ENCODE measurements at regions of chr3 and their contacts with region 1.

Region 1: DNA sequence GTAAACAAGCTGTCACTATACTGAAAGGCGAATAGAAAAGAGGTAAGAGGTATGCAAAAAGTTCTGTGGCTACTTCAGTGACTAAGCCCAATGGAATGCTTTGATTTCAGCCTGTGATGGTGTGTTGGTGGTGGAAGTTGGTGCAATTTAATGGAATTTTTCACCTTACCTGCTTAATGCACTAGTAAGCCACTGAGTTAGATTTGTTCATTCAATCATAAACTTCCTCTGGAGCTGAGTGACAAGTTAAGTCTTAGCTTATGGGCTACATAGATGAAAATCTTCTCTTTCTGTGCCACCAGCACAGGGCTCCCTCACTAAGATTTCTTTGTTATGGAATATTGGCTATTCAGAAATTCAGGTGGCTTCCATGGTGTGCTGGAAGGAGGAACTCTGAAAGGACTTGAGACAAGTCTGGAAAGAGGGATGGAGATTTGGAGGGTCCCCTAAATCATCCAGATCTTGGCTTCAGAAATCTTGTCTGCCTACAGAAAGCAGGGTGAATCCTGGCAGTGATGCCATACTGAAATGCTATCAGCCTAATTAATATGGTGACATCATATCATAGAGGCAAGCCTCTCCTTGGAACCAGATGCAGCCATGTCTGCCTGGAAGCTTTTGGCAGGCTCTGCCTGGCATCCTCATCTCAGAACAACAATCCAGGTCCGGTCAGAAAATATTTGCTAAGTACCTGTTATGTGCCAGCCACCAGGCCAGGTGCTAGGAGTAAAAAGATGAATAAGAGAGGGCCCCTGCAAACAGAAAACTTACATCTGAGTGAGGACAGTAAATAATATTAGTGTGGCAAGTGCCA is 8.1 kb upstream of the GAP43 start:
- DNase-seq: no peak
- ATAC-seq: no peak
- H3K4me3 Mint-ChIP-seq: no peak overlapping the region
- H3K27ac Mint-ChIP-seq: no peak overlapping the region
- H3K4me1 Mint-ChIP-seq: peaks cover 20% of the 10 kb centered on the region
- H3K27me3 Mint-ChIP-seq: peaks cover 21% of the 10 kb centered on the region

Region 2: DNA sequence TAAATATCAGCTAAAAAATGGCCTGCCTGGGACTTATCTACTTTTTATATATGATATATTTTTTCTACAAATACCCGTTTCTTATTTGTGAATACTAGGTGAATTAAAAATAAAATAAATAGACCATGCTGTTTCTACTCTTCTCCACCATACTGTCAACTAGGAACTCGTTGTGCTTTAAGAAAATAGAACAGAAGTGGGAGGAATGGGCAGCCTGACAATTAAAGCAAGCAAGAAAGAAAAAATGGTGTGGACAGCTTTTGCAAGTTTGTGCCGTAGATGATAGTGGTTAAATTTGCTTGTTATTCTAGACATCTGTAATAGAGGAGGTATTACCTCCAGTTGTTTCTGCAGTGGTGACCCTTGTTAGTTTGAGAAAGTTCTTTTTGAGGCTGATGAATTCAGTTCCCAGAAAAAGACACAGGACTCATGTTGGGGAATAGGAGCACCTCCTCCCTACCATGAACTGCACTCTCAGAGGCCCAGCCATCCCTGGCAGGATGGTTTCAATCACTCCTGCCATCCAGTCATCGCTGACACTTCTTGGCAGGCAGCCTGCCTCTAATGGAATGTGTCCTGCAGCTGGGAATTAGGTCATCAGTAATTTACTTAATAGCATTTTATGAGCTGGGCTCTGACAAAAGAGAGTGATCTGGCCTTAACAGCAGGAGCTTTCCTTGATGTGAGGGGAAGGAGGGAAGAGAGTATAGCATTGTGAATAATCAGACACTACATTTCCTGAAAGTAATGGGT is 96.9 kb before region 1 on chr3:
- CTCF ChIA-PET with region 1: no interaction called
- POLR2A ChIA-PET with region 1: no interaction called
- intact Hi-C with region 1: loop called in 1 of 2 experiments (anchors 5 kb)
- DNase-seq: no peak
- ATAC-seq: no peak
- H3K4me3 Mint-ChIP-seq: no peak overlapping the region
- H3K27ac Mint-ChIP-seq: no peak overlapping the region
- H3K4me1 Mint-ChIP-seq: peaks cover 9% of the 10 kb centered on the region
- H3K27me3 Mint-ChIP-seq: peaks cover 7% of the 10 kb centered on the region

Region 3: DNA sequence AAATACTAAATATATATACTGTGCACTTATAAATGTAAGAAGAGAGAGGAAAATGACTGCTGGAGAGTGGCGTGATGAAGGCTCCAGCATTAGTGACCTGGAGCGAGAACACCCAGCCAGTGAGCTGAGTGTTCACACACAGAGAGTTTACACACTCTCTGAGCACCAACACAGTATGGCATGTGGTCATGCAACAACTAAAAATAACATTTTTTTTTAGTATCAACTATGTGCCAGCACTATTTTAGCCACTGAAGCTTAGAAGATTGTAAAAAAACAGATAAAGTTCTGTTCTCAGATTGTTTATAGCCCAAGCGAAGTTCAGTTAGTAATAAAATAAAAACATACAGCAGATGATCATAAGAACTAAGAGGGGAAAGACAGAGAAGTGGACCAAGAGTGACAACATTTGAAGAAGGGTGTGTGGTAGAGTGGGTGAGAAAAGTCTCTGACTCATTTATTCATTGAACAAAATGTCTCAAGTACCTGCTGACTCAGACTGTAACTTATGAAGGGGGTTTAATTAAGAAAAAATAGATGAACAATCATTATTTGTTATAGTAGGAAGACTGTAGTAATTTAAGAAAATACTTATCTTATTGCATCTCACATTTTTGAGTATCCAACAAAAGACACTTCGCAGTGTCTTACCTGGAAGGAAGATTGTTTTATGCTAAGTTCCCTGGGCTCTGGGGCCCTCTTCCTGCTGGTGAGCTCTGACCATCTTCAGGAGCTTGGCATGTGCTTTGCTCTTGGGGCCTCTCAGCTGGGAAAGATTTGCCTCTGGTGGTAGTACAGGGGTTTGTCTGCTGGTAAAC is 51.9 kb after region 1 on chr3:
- CTCF ChIA-PET with region 1: no interaction called
- POLR2A ChIA-PET with region 1: no interaction called
- intact Hi-C with region 1: loop called in 1 of 2 experiments (anchors 2 kb)
- DNase-seq: peak; percentile 15
- ATAC-seq: peak; percentile 92
- H3K4me3 Mint-ChIP-seq: no peak overlapping the region
- H3K27ac Mint-ChIP-seq: no peak overlapping the region
- H3K4me1 Mint-ChIP-seq: peaks cover 39% of the 10 kb centered on the region
- H3K27me3 Mint-ChIP-seq: peaks cover 2% of the 10 kb centered on the region